Activated B cell treated with CpG ODN at 0.5 μM for 24 hours (primary cell): ENCODE measurements at regions of chr6 and their contacts with region 1.

Region 1: DNA sequence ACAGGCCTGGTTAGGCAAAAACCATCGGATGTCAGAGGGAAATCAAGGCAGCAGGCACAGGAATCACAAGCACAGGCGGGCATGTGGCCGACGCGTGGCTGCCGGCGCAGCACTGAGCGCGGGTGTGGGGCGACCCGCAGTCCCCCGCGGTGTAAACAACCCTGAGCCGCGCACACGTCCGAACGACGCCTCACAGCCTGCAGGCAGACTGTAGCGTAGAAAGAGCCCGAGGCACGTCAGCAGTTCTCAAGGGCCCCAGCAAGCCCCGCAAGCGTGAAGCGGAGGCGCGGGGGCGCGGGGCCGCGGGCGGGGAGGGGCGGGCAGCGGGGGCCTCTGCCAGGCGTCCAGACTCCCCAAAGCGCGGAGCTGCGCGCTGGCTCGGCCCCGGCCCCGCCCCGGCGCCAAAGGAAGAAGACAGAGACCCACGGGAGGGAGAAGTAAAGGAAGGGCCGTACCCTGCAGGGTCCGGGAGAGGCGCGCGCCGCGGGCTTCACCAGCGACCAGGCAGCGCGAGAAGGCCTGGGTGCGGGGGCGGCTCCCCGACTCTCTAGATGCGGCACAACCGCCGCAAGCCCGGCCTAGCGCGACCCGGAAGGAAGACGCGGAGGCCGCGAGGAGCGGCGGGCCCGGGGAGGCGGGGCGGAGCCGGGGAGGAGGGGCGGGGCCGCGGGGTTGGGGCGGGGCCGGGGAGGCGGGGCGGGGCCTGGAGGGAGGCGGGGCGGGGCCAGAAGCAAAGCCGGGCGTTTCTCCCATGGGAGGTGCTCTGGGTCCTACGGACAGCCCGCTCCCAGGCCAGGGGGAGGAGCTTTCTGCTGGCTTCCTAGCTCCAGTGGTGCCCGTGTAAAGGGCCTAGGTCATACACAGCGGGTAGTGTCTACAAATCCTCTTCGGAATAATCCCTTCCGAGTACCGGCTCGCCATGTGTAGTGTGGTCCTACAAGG is at the start of gene FBXL4:
- DNase-seq: peak; percentile 77
- ATAC-seq: peak; percentile 86
- H3K4me3 Mint-ChIP-seq: peak within 1 kb of the TSS; percentile 91
- H3K27ac Mint-ChIP-seq: peak within 1 kb of the TSS; percentile 86
- H3K4me1 Mint-ChIP-seq: peaks cover 35% of the 10 kb centered on the region
- H3K27me3 Mint-ChIP-seq: no peaks in the 10 kb centered on the region
- CTCF ChIP-seq: no peak
- total RNA-seq, gene FBXL4: 10.2 and 10.8 TPM in 2 replicates

Region 2: GRCh38 chr6:97282726-97283617 is 1664.7 kb before region 1 on chr6 and contains the start of gene MMS22L:
- CTCF ChIA-PET with region 1: no interaction called
- POLR2A ChIA-PET with region 1: no interaction called
- intact Hi-C with region 1: loop called (anchors 2 kb)
- DNase-seq: peak; percentile 83
- ATAC-seq: peak; percentile 98
- H3K4me3 Mint-ChIP-seq: peak within 1 kb of the TSS; percentile 91
- H3K27ac Mint-ChIP-seq: peak within 1 kb of the TSS; percentile 87
- H3K4me1 Mint-ChIP-seq: peaks cover 21% of the 10 kb centered on the region
- H3K27me3 Mint-ChIP-seq: no peaks in the 10 kb centered on the region
- CTCF ChIP-seq: no peak
- total RNA-seq, gene MMS22L: 15.5 and 17.9 TPM in 2 replicates

Region 3: DNA sequence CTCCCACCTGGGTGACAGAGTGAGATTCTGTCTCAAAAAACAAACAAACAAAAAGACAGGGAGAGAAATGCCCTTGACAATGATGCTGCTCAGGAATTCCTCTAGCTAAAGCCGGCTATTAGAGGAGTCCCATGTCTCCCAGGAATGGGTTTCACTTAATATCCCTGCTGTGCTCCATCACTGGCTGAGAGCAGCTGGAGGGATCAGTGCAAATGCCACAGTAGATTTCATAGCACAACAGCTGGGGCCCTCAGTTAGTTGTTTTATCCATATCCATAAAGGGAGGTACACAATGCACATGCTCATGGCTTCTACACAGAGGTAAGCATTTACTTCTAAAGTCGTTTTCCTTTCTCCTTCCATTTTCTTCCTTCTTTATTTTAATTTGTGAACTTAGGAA is 855.3 kb before region 1 on chr6:
- CTCF ChIA-PET with region 1: no interaction called
- POLR2A ChIA-PET with region 1: no interaction called
- intact Hi-C with region 1: no loop called
- DNase-seq: no peak
- ATAC-seq: no peak
- H3K4me3 Mint-ChIP-seq: no peak overlapping the region
- H3K27ac Mint-ChIP-seq: no peak overlapping the region
- H3K4me1 Mint-ChIP-seq: no peaks in the 10 kb centered on the region
- H3K27me3 Mint-ChIP-seq: no peaks in the 10 kb centered on the region
- CTCF ChIP-seq: no peak

Region 4: GRCh38 chr6:98834060-98835031 is 113.3 kb before region 1 on chr6 and contains the start of gene POU3F2:
- CTCF ChIA-PET with region 1: no interaction called
- POLR2A ChIA-PET with region 1: no interaction called
- intact Hi-C with region 1: loop called (anchors 2 kb)
- DNase-seq: peak; percentile 48
- ATAC-seq: peak; percentile 88
- H3K4me3 Mint-ChIP-seq: peak within 1 kb of the TSS; percentile 89
- H3K27ac Mint-ChIP-seq: no peak within 1 kb of the TSS
- H3K4me1 Mint-ChIP-seq: peaks cover 47% of the 10 kb centered on the region
- H3K27me3 Mint-ChIP-seq: peaks cover 60% of the 10 kb centered on the region
- CTCF ChIP-seq: no peak
- total RNA-seq, gene POU3F2: not detected in 2 replicates

Region 5: DNA sequence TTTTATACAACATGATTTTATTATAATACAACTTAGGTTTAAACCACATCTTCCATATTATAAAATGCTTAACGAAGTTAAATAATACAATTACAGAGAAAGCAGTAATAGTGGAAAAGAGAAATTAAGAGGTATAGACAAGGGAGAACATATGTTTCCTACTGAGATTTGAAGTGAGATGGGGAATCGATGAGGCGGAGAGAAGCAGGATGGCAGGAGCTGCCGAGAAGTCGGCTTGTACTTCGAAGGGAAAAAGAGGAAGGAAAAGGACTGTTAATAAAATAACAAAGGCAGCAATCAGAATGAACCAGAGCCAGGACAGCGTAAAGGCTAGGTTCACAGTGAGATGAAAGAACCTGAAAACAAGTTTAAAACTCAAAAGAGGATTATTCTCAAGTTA is 15.2 kb before region 1 on chr6:
- CTCF ChIA-PET with region 1: no interaction called
- POLR2A ChIA-PET with region 1: no interaction called
- intact Hi-C with region 1: loop called (anchors 1 kb)
- DNase-seq: no peak
- ATAC-seq: peak; percentile 31
- H3K4me3 Mint-ChIP-seq: peak overlapping the region; percentile 44
- H3K27ac Mint-ChIP-seq: no peak overlapping the region
- H3K4me1 Mint-ChIP-seq: peaks cover 50% of the 10 kb centered on the region
- H3K27me3 Mint-ChIP-seq: no peaks in the 10 kb centered on the region
- CTCF ChIP-seq: no peak

Region 6: GRCh38 chr6:99241905-99242534 is 294.4 kb after region 1 on chr6:
- CTCF ChIA-PET with region 1: no interaction called
- POLR2A ChIA-PET with region 1: no interaction called
- intact Hi-C with region 1: no loop called
- DNase-seq: no peak
- ATAC-seq: no peak
- H3K4me3 Mint-ChIP-seq: no peak overlapping the region
- H3K27ac Mint-ChIP-seq: no peak overlapping the region
- H3K4me1 Mint-ChIP-seq: no peaks in the 10 kb centered on the region
- H3K27me3 Mint-ChIP-seq: no peaks in the 10 kb centered on the region
- CTCF ChIP-seq: no peak

Region 7: GRCh38 chr6:99568103-99568933 is 620.7 kb after region 1 on chr6 and contains the start of gene CCNC:
- CTCF ChIA-PET with region 1: no interaction called
- POLR2A ChIA-PET with region 1: no interaction called
- intact Hi-C with region 1: loop called (anchors 5 kb)
- DNase-seq: peak; percentile 82
- ATAC-seq: peak; percentile 96
- H3K4me3 Mint-ChIP-seq: peak within 1 kb of the TSS; percentile 99
- H3K27ac Mint-ChIP-seq: peak within 1 kb of the TSS; percentile 93
- H3K4me1 Mint-ChIP-seq: peaks cover 32% of the 10 kb centered on the region
- H3K27me3 Mint-ChIP-seq: no peaks in the 10 kb centered on the region
- CTCF ChIP-seq: no peak
- total RNA-seq, gene CCNC: 50.4 and 51.6 TPM in 2 replicates

Region 8: DNA sequence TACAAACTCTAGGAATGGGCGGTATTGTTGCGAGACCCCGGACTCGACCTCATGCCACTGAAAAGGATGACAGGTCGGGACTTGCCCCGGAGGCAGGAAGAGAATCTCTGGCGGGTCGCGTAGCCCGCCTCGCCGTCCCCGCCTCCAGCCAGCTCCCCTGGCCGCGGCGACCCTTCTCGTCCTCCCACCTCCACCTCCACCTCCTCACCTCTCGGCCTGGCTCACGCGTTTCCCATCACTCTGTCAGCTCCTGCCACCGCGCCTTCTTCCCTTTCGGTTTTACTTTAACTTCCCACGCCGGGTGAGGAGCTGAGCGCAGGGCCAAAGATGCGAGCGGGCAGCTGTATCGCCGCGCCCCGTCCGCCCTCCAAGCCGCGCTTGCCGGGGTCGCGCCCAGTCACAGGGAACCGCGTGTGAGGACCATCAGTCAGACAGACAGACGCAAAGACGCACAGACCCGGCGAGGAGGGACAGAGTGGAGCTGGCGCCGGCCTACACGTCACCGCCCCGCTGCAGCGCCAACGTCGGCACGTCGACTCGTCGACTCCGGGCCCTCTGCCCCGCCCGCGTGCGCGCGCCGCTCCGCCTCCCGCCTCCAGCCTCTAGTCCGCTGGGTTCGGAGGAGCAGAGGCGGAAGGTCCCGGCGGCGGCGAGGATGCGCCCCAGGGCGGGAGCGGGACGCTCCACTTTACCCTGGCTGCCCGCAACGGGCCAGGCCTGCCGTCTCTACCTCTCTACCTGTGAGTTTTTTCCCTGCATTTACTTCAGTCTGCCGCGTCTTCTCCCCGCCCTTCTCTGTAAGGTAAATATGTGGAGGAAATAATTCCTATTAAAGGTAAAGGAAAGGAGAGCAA is 1933.5 kb after region 1 on chr6 and contains the start of gene ASCC3:
- CTCF ChIA-PET with region 1: no interaction called
- POLR2A ChIA-PET with region 1: no interaction called
- intact Hi-C with region 1: loop called (anchors 10 kb)
- DNase-seq: peak; percentile 87
- ATAC-seq: peak; percentile 96
- H3K4me3 Mint-ChIP-seq: peak within 1 kb of the TSS; percentile 100
- H3K27ac Mint-ChIP-seq: peak within 1 kb of the TSS; percentile 97
- H3K4me1 Mint-ChIP-seq: peaks cover 34% of the 10 kb centered on the region
- H3K27me3 Mint-ChIP-seq: no peaks in the 10 kb centered on the region
- CTCF ChIP-seq: no peak
- total RNA-seq, gene ASCC3: 44.1 and 47.8 TPM in 2 replicates